Transverse colon (tissue), 4 donors: ENCODE measurements at regions of chr9 and their contacts with region 1.

Region 1: GRCh38 chr9:2132484-2133082 is 117.4 kb downstream of the SMARCA2 start:
- DNase-seq: no peak
- H3K4me3 ChIP-seq: no peak overlapping the region
- H3K27ac ChIP-seq: no peak overlapping the region
- H3K4me1 ChIP-seq: peaks cover 0 to 7% (median 0%) of the 10 kb centered on the region in 4 donors
- H3K27me3 ChIP-seq: no peaks in the 10 kb centered on the region
- CTCF ChIP-seq: peak; percentile 53 to 70 (median 63)
- EP300 ChIP-seq: no peak
- POLR2A ChIP-seq: no peak

Region 2: DNA sequence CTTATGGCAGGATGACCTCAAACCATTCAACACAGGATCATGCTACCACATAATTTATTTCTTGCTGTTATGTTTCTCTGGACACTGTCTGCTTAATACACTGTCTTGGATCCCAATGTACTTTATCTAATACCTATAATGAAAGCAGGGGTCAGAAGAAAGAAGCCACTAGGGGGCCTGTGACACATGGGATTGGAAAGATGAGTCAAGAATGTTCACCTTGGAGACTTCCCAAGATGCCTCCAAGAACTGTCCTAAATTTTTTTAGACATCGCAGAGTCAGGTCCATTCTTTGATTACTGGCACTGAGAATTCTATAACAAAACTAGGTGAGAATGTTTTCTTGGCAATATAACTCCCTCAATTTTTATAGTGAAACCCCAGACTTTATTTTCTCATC is 423.2 kb before region 1 on chr9:
- in situ Hi-C with region 1: no loop called
- intact Hi-C with region 1: no loop called
- DNase-seq: no peak
- H3K4me3 ChIP-seq: no peak overlapping the region
- H3K27ac ChIP-seq: no peak overlapping the region
- H3K4me1 ChIP-seq: no peaks in the 10 kb centered on the region
- H3K27me3 ChIP-seq: peaks cover 5% of the 10 kb centered on the region
- CTCF ChIP-seq: peak in 3 of 5 experiments; percentile 13 to 25 (median 16)
- EP300 ChIP-seq: no peak
- POLR2A ChIP-seq: no peak

Region 3: DNA sequence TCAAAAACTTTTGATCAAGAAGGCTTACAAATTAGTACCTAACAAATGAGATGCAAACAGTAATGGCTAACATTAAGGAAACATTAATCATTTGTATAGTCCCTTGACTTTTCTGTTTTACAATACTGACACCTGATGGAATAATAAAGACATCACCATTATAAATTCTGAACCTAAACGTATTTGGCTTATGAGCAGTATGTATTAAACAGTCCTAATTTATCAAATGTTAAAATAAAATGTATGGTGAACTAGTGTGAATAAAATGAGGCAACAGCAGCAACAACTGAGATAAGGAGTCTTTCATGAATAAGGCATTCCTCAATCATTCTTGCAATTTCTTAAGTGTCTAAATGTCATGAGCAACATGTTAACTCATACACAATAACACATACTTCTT is 705.3 kb after region 1 on chr9:
- in situ Hi-C with region 1: loop called in 2 of 4 experiments (anchors 25 kb)
- intact Hi-C with region 1: no loop called
- DNase-seq: no peak
- H3K4me3 ChIP-seq: peak overlapping the region in 1 of 4 donors; percentile 17
- H3K27ac ChIP-seq: peak overlapping the region in 2 of 4 donors; percentile 20 to 26
- H3K4me1 ChIP-seq: peaks cover 18 to 52% (median 31%) of the 10 kb centered on the region in 4 donors
- H3K27me3 ChIP-seq: no peaks in the 10 kb centered on the region
- CTCF ChIP-seq: peak in 2 of 5 experiments; percentile 7 to 18
- EP300 ChIP-seq: no peak
- POLR2A ChIP-seq: no peak

Region 4: DNA sequence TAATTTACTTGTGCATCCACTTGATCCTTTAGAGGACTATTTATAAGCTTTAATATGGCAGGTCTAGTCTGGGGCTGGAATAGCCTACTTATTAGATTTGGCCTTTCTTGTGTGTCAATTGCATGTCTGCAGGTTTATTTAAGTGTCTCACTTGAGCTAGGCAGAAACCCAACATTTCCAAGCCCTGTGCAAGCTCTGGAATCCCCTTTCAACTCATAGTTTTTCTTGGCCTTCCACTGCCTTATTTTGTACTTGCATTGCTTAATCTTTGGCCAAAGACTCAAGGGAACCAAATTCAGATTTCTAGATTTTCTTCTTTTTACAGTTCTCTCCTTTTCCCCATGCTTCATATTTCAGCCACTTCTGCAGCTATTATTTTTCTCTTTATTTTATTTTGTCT is 1495.7 kb after region 1 on chr9:
- in situ Hi-C with region 1: no loop called
- intact Hi-C with region 1: no loop called
- DNase-seq: no peak
- H3K4me3 ChIP-seq: no peak overlapping the region
- H3K27ac ChIP-seq: no peak overlapping the region
- H3K4me1 ChIP-seq: no peaks in the 10 kb centered on the region
- H3K27me3 ChIP-seq: no peaks in the 10 kb centered on the region
- CTCF ChIP-seq: no peak
- EP300 ChIP-seq: no peak
- POLR2A ChIP-seq: no peak